ENCODE measurements at regions of chr9 and their contacts with region 1.

Region 1: GRCh38 chr9:37485389-37486219 is at the start of gene POLR1E:
- DNase-seq: peak; percentile 94 to 98 (median 96)
- H3K4me3 ChIP-seq: peak within 1 kb of the TSS; percentile 65 to 80
- H3K4me3 Mint-ChIP-seq: peak within 1 kb of the TSS; percentile 92 to 99 (median 96)
- H3K27ac ChIP-seq: peak within 1 kb of the TSS; percentile 70
- H3K27ac Mint-ChIP-seq: peak within 1 kb of the TSS; percentile 74 to 99 (median 97)
- H3K4me1 ChIP-seq: peaks cover 32% of the 10 kb centered on the region
- H3K4me1 Mint-ChIP-seq: peaks cover 26 to 48% (median 39%) of the 10 kb centered on the region in 4 donors
- H3K27me3 ChIP-seq: peaks cover 5% of the 10 kb centered on the region
- H3K27me3 Mint-ChIP-seq: peaks cover 5% of the 10 kb centered on the region in 2 donors
- total RNA-seq, gene POLR1E: 36.2 to 38.2 TPM

Region 2: GRCh38 chr9:37422289-37423104 is 63.1 kb before region 1 on chr9 and contains the start of gene GRHPR:
- CTCF ChIA-PET with region 1: no interaction called
- POLR2A ChIA-PET with region 1: interaction called, 18 read pairs
- intact Hi-C with region 1: loop called (anchors 1 kb)
- DNase-seq: peak; percentile 84 to 87 (median 86)
- H3K4me3 ChIP-seq: peak within 1 kb of the TSS; percentile 85 to 88
- H3K4me3 Mint-ChIP-seq: peak within 1 kb of the TSS; percentile 95 to 98 (median 96)
- H3K27ac ChIP-seq: peak within 1 kb of the TSS; percentile 72
- H3K27ac Mint-ChIP-seq: peak within 1 kb of the TSS; percentile 91 to 97 (median 95)
- H3K4me1 ChIP-seq: peaks cover 28% of the 10 kb centered on the region
- H3K4me1 Mint-ChIP-seq: peaks cover 18 to 34% (median 22%) of the 10 kb centered on the region in 4 donors
- H3K27me3 ChIP-seq: no peaks in the 10 kb centered on the region
- H3K27me3 Mint-ChIP-seq: no peaks in the 10 kb centered on the region
- total RNA-seq, gene GRHPR: 57.2 TPM

Region 3: GRCh38 chr9:37503736-37504135 is 18.1 kb after region 1 on chr9:
- CTCF ChIA-PET with region 1: no interaction called
- POLR2A ChIA-PET with region 1: interaction called, 11 read pairs
- intact Hi-C with region 1: no loop called
- DNase-seq: peak; percentile 49 to 82 (median 69)
- H3K4me3 ChIP-seq: no peak overlapping the region
- H3K4me3 Mint-ChIP-seq: peak overlapping the region; percentile 71 to 93 (median 78)
- H3K27ac ChIP-seq: peak overlapping the region; percentile 45
- H3K27ac Mint-ChIP-seq: peak overlapping the region; percentile 87 to 98 (median 95)
- H3K4me1 ChIP-seq: peaks cover 15% of the 10 kb centered on the region
- H3K4me1 Mint-ChIP-seq: peaks cover 16 to 50% (median 33%) of the 10 kb centered on the region in 4 donors
- H3K27me3 ChIP-seq: no peaks in the 10 kb centered on the region
- H3K27me3 Mint-ChIP-seq: no peaks in the 10 kb centered on the region

Region 4: DNA sequence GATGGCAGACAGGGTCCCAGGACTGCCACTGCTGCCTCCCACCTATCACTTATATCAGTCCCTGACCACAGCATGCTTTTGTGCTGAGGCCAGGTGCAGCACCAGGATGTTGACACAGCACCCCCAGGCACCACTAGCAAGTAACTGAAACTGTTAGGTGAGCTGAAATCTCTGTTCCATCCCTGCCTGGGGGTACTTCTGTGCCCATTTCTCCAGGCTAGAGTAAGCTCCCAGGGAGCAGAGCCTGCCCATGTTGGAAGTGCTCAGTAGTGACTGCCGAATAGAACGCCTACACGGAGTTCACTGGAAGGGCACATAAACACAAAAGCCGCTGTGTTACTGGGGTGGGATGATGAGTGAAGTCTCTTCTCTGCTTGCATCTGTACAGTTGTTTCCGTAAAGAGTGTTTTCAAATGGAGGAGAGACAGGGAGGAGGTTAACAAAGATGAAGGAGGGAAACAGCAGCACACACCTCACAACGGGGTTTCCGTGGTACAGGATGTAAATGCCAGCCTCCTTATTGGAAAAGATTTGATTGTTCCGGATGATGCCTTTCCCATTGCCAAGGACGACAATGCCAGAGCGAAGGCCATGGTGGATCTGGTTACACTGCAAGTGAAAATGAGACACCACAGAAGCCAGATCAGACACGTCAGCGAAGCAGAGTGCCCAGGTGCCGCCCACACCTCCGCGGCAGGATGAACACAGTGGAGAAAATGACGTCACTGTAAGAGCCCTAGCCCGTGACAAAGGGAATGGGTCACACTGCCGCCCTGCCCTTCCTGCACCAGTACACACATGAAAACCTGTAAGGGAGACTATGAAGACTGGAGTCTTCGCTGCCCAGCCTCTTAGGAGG is 43.3 kb after region 1 on chr9:
- CTCF ChIA-PET with region 1: no interaction called
- POLR2A ChIA-PET with region 1: interaction called, 15 read pairs
- intact Hi-C with region 1: loop called (anchors 5 kb)
- DNase-seq: peak; percentile 82 to 90 (median 87)
- H3K4me3 ChIP-seq: peak overlapping the region; percentile 19 to 37
- H3K4me3 Mint-ChIP-seq: peak overlapping the region; percentile 75 to 92 (median 84)
- H3K27ac ChIP-seq: peak overlapping the region; percentile 70
- H3K27ac Mint-ChIP-seq: peak overlapping the region; percentile 91 to 99 (median 99)
- H3K4me1 ChIP-seq: peaks cover 31% of the 10 kb centered on the region
- H3K4me1 Mint-ChIP-seq: peaks cover 15 to 36% (median 25%) of the 10 kb centered on the region in 4 donors
- H3K27me3 ChIP-seq: no peaks in the 10 kb centered on the region
- H3K27me3 Mint-ChIP-seq: no peaks in the 10 kb centered on the region

Region 5: GRCh38 chr9:37746848-37747753 is 261.5 kb after region 1 on chr9:
- CTCF ChIA-PET with region 1: interaction called, 3 read pairs
- POLR2A ChIA-PET with region 1: no interaction called
- intact Hi-C with region 1: loop called (anchors 1 kb)
- DNase-seq: peak; percentile 40 to 52 (median 45)
- H3K4me3 ChIP-seq: no peak overlapping the region
- H3K4me3 Mint-ChIP-seq: no peak overlapping the region
- H3K27ac ChIP-seq: no peak overlapping the region
- H3K27ac Mint-ChIP-seq: no peak overlapping the region
- H3K4me1 ChIP-seq: no peaks in the 10 kb centered on the region
- H3K4me1 Mint-ChIP-seq: peaks cover 0 to 4% (median 0%) of the 10 kb centered on the region in 4 donors
- H3K27me3 ChIP-seq: no peaks in the 10 kb centered on the region
- H3K27me3 Mint-ChIP-seq: no peaks in the 10 kb centered on the region

Region 6: DNA sequence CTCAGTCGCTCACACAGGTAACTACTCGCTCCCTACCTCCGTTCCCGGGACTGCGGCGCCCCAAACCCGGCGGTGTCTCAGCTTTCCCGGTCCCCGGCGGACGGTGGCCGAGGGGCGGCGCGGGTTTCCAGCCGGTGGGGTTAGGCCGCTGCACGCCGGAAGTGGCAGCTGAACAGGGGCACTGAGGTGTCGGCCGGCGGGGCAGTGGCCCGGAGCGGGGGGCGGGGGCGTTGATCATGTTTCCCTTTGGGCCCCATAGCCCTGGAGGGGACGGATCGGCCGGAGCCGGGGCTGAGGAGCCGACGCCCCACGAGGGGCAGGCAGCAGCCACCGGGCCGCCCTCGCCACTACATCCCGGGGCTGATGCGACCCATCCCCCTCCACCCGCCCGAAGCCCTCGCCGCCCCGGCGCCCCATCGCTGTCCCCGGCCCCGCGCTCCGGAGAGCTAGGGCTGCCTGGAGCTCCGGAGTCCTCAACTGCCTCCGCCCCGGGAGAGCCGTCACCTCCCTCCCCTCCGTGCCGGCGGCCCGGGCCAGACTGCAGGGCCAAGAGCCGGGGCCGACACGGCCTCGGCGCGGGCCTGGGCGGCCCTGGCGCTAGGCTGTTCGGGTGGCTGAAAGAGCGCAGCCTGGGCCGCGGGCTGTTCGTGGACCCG is 315.2 kb after region 1 on chr9 and contains the start of gene DCAF10:
- CTCF ChIA-PET with region 1: no interaction called
- POLR2A ChIA-PET with region 1: no interaction called
- intact Hi-C with region 1: loop called (anchors 5 kb)
- DNase-seq: peak; percentile 83 to 91 (median 86)
- H3K4me3 ChIP-seq: peak within 1 kb of the TSS; percentile 76 to 98
- H3K4me3 Mint-ChIP-seq: peak within 1 kb of the TSS; percentile 91 to 96 (median 94)
- H3K27ac ChIP-seq: peak within 1 kb of the TSS; percentile 70
- H3K27ac Mint-ChIP-seq: peak within 1 kb of the TSS; percentile 87 to 97 (median 92)
- H3K4me1 ChIP-seq: peaks cover 35% of the 10 kb centered on the region
- H3K4me1 Mint-ChIP-seq: peaks cover 23 to 48% (median 33%) of the 10 kb centered on the region in 4 donors
- H3K27me3 ChIP-seq: no peaks in the 10 kb centered on the region
- H3K27me3 Mint-ChIP-seq: no peaks in the 10 kb centered on the region
- total RNA-seq, gene DCAF10: 20.3 to 21.7 TPM

Region 7: GRCh38 chr9:37913480-37914153 is 428.0 kb after region 1 on chr9:
- CTCF ChIA-PET with region 1: interaction called, 3 read pairs
- POLR2A ChIA-PET with region 1: no interaction called
- intact Hi-C with region 1: loop called (anchors 2 kb)
- DNase-seq: peak; percentile 68 to 77 (median 70)
- H3K4me3 ChIP-seq: no peak overlapping the region
- H3K4me3 Mint-ChIP-seq: no peak overlapping the region
- H3K27ac ChIP-seq: no peak overlapping the region
- H3K27ac Mint-ChIP-seq: peak overlapping the region in 1 of 7 donors; percentile 2
- H3K4me1 ChIP-seq: no peaks in the 10 kb centered on the region
- H3K4me1 Mint-ChIP-seq: peaks cover 0 to 4% (median 0%) of the 10 kb centered on the region in 4 donors
- H3K27me3 ChIP-seq: no peaks in the 10 kb centered on the region
- H3K27me3 Mint-ChIP-seq: no peaks in the 10 kb centered on the region